Pancreas (tissue), 10 donors: ENCODE measurements at regions of chr9 and their contacts with region 1.

Region 1: GRCh38 chr9:37668116-37668601 is 17.4 kb downstream of the FRMPD1 start:
- DNase-seq: no peak
- ATAC-seq: no peak
- H3K4me3 ChIP-seq: no peak overlapping the region
- H3K27ac ChIP-seq: no peak overlapping the region
- H3K4me1 ChIP-seq: no peaks in the 10 kb centered on the region
- H3K27me3 ChIP-seq: no peaks in the 10 kb centered on the region
- CTCF ChIP-seq: no peak

Region 2: GRCh38 chr9:37602817-37603216 is 65.3 kb before region 1 on chr9:
- intact Hi-C with region 1: loop called in 1 of 3 experiments (anchors 10 kb)
- DNase-seq: peak in 5 of 6 donors; percentile 81 to 93 (median 86)
- ATAC-seq: peak; percentile 98 to 100 (median 99)
- H3K4me3 ChIP-seq: no peak overlapping the region
- H3K27ac ChIP-seq: peak overlapping the region in 1 of 4 donors; percentile 57
- H3K4me1 ChIP-seq: peaks cover 0 to 14% (median 5%) of the 10 kb centered on the region in 3 donors
- H3K27me3 ChIP-seq: no peaks in the 10 kb centered on the region
- CTCF ChIP-seq: no peak